IMR-90 (cell line): ENCODE measurements at regions of chr3 and their contacts with region 1.

Region 1: DNA sequence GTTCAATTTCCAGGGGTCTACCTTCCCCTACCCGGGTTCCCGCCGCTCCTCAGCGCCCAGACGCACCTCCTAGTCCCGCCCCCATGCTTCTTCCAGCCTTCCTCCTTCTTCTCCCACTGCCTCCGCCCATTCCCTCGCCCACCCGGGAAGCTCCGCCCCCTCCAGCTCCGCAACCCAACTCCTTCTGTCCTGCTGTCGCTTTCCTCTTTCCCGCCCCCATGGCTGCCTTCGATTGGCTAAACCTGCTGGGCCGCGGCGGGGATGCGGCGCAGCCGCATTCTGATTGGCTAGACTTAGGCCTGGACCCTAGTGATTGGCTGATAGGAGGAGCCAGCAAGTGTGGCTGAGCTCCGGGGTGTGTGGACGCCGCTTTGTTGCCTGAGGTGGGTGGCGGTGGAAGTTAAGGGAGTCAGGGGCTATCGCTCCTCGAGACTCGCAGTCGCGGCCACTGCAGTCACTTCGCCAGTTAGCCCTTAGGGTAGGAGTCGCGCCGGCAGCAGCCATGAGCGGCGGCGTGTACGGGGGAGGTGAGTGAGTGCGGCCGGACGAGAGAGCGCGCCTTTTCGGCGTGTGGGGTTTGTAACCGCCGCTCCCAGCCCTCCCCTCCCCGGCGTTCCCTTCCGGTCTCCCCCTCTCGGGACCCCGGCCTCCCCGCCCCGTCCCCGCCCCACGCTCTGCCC is at the start of gene ACTL6A:
- DNase-seq: peak; percentile 99
- ATAC-seq: peak; percentile 95
- H3K4me3 ChIP-seq: peak within 1 kb of the TSS; percentile 86
- H3K27ac ChIP-seq: peak within 1 kb of the TSS; percentile 93
- H3K4me1 ChIP-seq: peaks cover 2% of the 10 kb centered on the region; the same call in 1 of the 2 replicates
- H3K27me3 ChIP-seq: no peaks in the 10 kb centered on the region
- CTCF ChIP-seq: no peak
- POLR2A ChIP-seq: peak; percentile 83
- RAD21 ChIP-seq: no peak
- total RNA-seq, gene ACTL6A: 70.1 and 115 TPM in 2 replicates

Region 2: DNA sequence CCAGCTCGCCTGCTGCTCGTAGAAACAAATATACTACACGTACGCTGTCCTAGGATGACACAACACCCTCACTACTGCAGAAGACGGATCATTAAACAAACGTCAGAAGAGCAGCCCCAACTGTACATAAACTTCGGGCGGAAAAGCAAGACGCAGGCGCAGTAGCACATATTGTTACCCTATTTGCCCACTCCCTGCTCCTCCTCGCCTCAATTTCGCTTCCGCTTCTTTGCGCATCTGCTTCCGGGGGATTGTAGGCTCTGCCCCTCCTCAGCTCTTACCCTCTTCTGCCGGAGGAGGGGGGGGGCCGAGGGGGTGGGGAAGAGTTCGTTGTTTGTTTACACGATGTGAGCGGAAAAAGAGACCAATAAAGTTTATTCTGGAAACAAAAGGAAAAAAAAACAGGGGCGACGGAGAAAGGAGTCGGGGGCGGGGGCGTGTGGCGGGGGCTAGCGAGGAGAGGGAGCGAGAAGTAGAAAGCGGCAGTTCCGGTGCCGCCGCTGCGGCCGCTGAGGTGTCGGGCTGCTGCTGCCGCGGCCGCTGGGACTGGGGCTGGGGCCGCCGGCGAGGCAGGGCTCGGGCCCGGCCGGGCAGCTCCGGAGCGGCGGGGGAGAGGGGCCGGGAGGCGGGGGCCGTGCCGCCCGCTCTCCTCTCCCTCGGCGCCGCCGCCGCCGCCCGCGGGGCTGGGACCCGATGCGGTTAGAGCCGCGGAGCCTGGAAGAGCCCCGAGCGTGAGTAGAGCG is 414.7 kb before region 1 on chr3 and contains the start of gene PIK3CA:
- CTCF ChIA-PET with region 1: no interaction called
- POLR2A ChIA-PET with region 1: no interaction called
- dilution Hi-C with region 1: no loop called
- in situ Hi-C with region 1: no loop called
- intact Hi-C with region 1: loop called (anchors 5 kb)
- DNase-seq: peak; percentile 99
- ATAC-seq: peak; percentile 86
- H3K4me3 ChIP-seq: peak within 1 kb of the TSS; percentile 94
- H3K27ac ChIP-seq: peak within 1 kb of the TSS; percentile 94
- H3K4me1 ChIP-seq: peaks cover 3% of the 10 kb centered on the region
- H3K27me3 ChIP-seq: no peaks in the 10 kb centered on the region
- CTCF ChIP-seq: no peak
- POLR2A ChIP-seq: peak; percentile 73; the same call in 1 of the 2 replicates
- RAD21 ChIP-seq: no peak
- total RNA-seq, gene PIK3CA: 22.4 and 28.6 TPM in 2 replicates

Region 3: DNA sequence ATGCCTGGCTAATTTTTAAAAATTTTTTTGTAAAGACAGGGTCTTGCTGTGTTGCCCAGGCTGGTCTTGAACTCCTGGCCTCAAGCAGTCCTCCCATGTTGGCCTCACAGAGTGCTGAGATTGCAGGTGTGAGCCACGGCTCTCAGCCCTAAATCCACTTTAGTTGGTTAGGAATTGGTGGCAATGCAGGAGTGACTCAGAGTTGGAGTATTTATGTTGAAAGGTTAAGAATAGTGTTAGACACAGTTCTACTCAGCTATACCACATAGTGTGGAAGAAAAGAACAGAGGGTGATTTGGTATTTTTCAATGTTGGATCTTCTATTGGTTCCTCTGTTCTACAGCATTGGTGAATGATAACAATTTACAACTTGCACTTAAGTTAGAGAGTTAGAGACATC is 232.3 kb before region 1 on chr3:
- CTCF ChIA-PET with region 1: no interaction called
- POLR2A ChIA-PET with region 1: no interaction called
- dilution Hi-C with region 1: no loop called
- in situ Hi-C with region 1: loop called (anchors 10 kb)
- intact Hi-C with region 1: no loop called
- DNase-seq: peak; percentile 26
- ATAC-seq: peak; percentile 51; the same call in 1 of the 2 replicates
- H3K4me3 ChIP-seq: no peak overlapping the region
- H3K27ac ChIP-seq: no peak overlapping the region
- H3K4me1 ChIP-seq: 0 out of 2 replicates have a peak, but pooled peaks cover 2% of the 10 kb centered on the region
- H3K27me3 ChIP-seq: no peaks in the 10 kb centered on the region
- CTCF ChIP-seq: no peak
- POLR2A ChIP-seq: no peak
- RAD21 ChIP-seq: no peak

Region 4: GRCh38 chr3:179446501-179446900 is 116.2 kb before region 1 on chr3:
- CTCF ChIA-PET with region 1: no interaction called
- POLR2A ChIA-PET with region 1: no interaction called
- dilution Hi-C with region 1: no loop called
- in situ Hi-C with region 1: loop called (anchors 5 kb)
- intact Hi-C with region 1: loop called (anchors 1 kb)
- DNase-seq: peak; percentile 48
- ATAC-seq: no peak
- H3K4me3 ChIP-seq: no peak overlapping the region
- H3K27ac ChIP-seq: no peak overlapping the region
- H3K4me1 ChIP-seq: peaks cover 5% of the 10 kb centered on the region
- H3K27me3 ChIP-seq: no peaks in the 10 kb centered on the region
- CTCF ChIP-seq: peak; percentile 40
- POLR2A ChIP-seq: no peak
- RAD21 ChIP-seq: peak; percentile 34

Region 5: GRCh38 chr3:180320631-180321030 is 757.9 kb after region 1 on chr3:
- CTCF ChIA-PET with region 1: no interaction called
- POLR2A ChIA-PET with region 1: no interaction called
- dilution Hi-C with region 1: no loop called
- in situ Hi-C with region 1: no loop called
- intact Hi-C with region 1: no loop called
- DNase-seq: no peak
- ATAC-seq: no peak
- H3K4me3 ChIP-seq: no peak overlapping the region
- H3K27ac ChIP-seq: no peak overlapping the region
- H3K4me1 ChIP-seq: peaks cover 2% of the 10 kb centered on the region; the same call in 1 of the 2 replicates
- H3K27me3 ChIP-seq: no peaks in the 10 kb centered on the region
- CTCF ChIP-seq: no peak
- POLR2A ChIP-seq: no peak
- RAD21 ChIP-seq: no peak